Ovary (tissue), 10 donors: ENCODE measurements at regions of chrX and their contacts with region 1.

Region 1: DNA sequence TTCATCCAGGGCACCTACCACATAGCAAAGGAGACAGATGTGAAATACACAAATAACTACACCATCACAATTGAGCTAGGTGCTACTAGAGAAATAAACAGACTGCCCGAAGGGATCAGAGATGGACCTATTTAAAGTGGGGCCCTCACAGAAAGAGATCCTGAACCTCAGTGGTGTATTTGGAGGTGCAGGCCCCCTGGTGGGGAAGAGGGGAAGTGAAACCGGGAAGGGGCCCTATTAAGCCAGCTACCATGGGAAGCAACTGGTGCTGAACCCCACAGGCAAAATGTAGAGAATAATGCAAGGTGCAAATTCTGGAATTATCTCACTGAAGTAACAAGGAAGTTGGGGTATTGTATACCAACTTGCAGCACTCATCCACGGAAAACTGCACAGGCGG is 78.6 kb upstream of the FAM9A start:
- DNase-seq: no peak
- H3K4me3 ChIP-seq: no peak overlapping the region
- H3K27ac ChIP-seq: no peak overlapping the region
- H3K4me1 ChIP-seq: no peaks in the 10 kb centered on the region
- H3K27me3 ChIP-seq: no peaks in the 10 kb centered on the region
- CTCF ChIP-seq: no peak
- EP300 ChIP-seq: no peak
- POLR2A ChIP-seq: no peak

Region 2: GRCh38 chrX:8743126-8743732 is 136.5 kb before region 1 on chrX:
- intact Hi-C with region 1: no loop called
- DNase-seq: peak in 4 of 5 donors; percentile 31 to 49 (median 40)
- H3K4me3 ChIP-seq: no peak overlapping the region
- H3K27ac ChIP-seq: no peak overlapping the region
- H3K4me1 ChIP-seq: no peaks in the 10 kb centered on the region
- H3K27me3 ChIP-seq: no peaks in the 10 kb centered on the region
- CTCF ChIP-seq: peak in 1 of 3 donors; percentile 14
- EP300 ChIP-seq: no peak
- POLR2A ChIP-seq: no peak

Region 3: DNA sequence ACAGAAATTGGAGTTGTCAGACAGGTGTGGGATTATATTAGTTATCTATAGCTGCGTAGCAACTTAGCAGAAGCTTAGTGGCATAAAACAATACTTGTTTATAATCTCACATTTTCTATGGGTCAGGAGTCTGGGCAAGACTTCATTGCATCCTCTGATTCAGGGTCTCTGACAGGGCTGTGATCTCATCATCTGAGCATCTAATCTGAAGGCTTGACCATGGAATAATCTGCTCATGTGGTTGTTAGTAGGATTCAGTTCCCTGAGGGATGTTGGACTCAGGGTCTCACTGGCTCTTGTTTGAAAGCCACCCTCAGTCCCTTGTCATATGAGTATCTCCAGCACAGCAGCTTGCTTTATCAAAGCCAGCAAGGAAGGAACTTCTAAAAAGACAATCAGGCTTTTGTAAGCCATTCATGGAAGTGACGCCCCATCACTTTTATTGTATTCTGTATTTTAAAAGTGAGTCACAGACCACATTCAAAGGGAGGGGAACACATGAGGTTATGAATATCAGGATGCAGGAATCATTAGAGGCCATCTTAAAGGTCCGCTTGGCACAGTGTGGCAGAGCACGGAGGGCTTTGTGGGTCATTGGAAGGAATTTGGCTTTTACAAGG is 191.4 kb after region 1 on chrX:
- intact Hi-C with region 1: no loop called
- DNase-seq: no peak
- H3K4me3 ChIP-seq: no peak overlapping the region
- H3K27ac ChIP-seq: no peak overlapping the region
- H3K4me1 ChIP-seq: no peaks in the 10 kb centered on the region
- H3K27me3 ChIP-seq: no peaks in the 10 kb centered on the region
- CTCF ChIP-seq: no peak
- EP300 ChIP-seq: no peak
- POLR2A ChIP-seq: no peak

Region 4: GRCh38 chrX:9682456-9682855 is 802.7 kb after region 1 on chrX:
- intact Hi-C with region 1: loop called in 1 of 4 experiments (anchors 10 kb)
- DNase-seq: peak in 3 of 5 donors; percentile 14 to 23 (median 23)
- H3K4me3 ChIP-seq: no peak overlapping the region
- H3K27ac ChIP-seq: no peak overlapping the region
- H3K4me1 ChIP-seq: no peaks in the 10 kb centered on the region
- H3K27me3 ChIP-seq: no peaks in the 10 kb centered on the region
- CTCF ChIP-seq: peak in 1 of 3 donors; percentile 18
- EP300 ChIP-seq: no peak
- POLR2A ChIP-seq: no peak

Region 5: GRCh38 chrX:10859353-10859752 is 1979.6 kb after region 1 on chrX:
- intact Hi-C with region 1: no loop called
- DNase-seq: no peak
- H3K4me3 ChIP-seq: no peak overlapping the region
- H3K27ac ChIP-seq: no peak overlapping the region
- H3K4me1 ChIP-seq: peaks cover 2% of the 10 kb centered on the region
- H3K27me3 ChIP-seq: no peaks in the 10 kb centered on the region
- CTCF ChIP-seq: no peak
- EP300 ChIP-seq: no peak
- POLR2A ChIP-seq: no peak